GM10248 (cell line): ENCODE measurements at regions of chr12 and their contacts with region 1.

Region 1: GRCh38 chr12:4049298-4050080 is 176.3 kb upstream of the PARP11 start:
- DNase-seq: no peak
- CTCF ChIP-seq: no peak

Region 2: GRCh38 chr12:4037747-4038312 is 11.7 kb before region 1 on chr12:
- CTCF ChIA-PET with region 1: interaction called, 11 read pairs
- POLR2A ChIA-PET with region 1: no interaction called
- DNase-seq: no peak
- CTCF ChIP-seq: peak; percentile 46

Region 3: GRCh38 chr12:4107436-4107878 is 58.0 kb after region 1 on chr12:
- CTCF ChIA-PET with region 1: no interaction called
- POLR2A ChIA-PET with region 1: no interaction called
- DNase-seq: peak; percentile 84
- CTCF ChIP-seq: peak; percentile 67